ENCODE measurements at regions of chr15 and their contacts with region 1.

Region 1: DNA sequence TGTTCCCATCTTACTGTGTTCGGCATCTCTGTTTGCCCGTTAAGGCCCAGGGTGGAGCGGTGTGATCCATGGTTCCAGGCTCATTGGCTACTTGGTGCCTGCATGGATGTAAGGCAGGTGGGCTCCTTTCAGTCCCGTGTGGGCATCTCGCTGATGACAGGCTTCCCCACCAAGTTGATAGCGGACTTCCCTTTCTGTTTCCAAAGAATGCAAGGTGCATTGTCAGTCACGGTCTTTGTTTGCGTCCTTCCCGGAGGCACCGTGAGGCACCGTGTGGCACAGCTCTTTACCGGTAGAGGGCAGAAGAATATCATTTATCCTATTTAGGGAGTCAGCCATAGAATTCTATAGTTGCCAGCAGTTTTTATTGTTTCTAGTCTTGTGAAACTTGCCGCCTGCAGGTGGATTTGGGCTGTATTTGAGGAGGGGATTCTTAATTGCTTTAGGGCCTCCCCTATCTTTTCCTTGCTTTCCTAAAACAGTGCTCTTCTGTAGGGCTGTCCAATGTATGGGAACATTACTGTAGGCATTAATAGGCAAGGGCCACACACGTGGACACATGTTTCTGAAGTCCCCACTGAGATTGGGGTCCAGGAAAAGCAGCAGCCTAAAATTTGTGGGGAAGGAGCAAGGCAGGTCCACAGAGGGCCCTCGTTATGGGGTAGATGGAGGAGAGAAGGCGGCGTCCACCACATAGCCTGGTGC is 244.1 kb downstream of the SLCO3A1 start:
- DNase-seq: peak; percentile 69
- H3K4me3 ChIP-seq: no peak overlapping the region; a peak in 1 of 4 replicates
- H3K27ac ChIP-seq: no peak overlapping the region
- H3K4me1 ChIP-seq: peaks cover 0 to 9% of the 10 kb centered on the region in 2 experiments; a peak in 1 of 4 replicates
- H3K27me3 ChIP-seq: no peaks in the 10 kb centered on the region
- CTCF ChIP-seq: peak; percentile 75
- EP300 ChIP-seq: no peak
- RAD21 ChIP-seq: peak; percentile 94

Region 2: GRCh38 chr15:92112180-92112579 is 14.6 kb after region 1 on chr15:
- CTCF ChIA-PET with region 1: interaction called, 34 read pairs
- POLR2A ChIA-PET with region 1: no interaction called
- DNase-seq: no peak
- H3K4me3 ChIP-seq: no peak overlapping the region
- H3K27ac ChIP-seq: no peak overlapping the region; a peak in 1 of 4 replicates
- H3K4me1 ChIP-seq: peaks cover 0 to 3% of the 10 kb centered on the region in 2 experiments; a peak in 1 of 4 replicates
- H3K27me3 ChIP-seq: no peaks in the 10 kb centered on the region
- CTCF ChIP-seq: no peak
- EP300 ChIP-seq: no peak
- RAD21 ChIP-seq: no peak

Region 3: DNA sequence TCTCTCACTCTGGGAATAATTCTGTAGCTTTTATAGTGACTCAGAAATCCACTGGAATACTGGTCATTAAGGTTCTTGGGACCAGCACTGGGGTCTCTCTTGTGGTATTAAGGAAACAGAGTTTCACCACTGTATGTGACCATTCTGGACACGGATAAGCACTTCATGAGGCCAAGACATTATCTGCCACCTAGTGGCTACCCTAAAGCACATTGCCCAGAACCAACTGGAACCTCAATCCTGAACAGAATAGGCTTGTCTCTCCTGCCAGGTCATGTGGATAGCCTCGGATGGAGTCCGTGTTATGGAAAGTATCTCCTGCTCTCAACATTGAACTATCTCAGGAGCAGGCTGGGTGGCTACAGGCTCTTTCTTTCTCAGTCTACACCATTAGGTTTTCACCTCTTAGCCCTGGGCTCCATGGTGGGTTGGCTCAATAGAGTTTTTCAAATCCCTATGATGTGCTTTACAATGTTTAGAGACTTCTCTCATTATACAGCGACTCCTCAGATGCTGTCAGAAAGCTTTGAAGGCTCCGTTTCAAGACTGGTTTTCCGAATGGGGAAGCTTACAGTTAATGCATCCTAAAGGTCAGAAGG is 128.5 kb after region 1 on chr15:
- CTCF ChIA-PET with region 1: interaction called, 12 read pairs
- POLR2A ChIA-PET with region 1: no interaction called
- DNase-seq: peak; percentile 22
- H3K4me3 ChIP-seq: peak overlapping the region in 1 of 2 experiments; percentile 19; a peak in 1 of 4 replicates
- H3K27ac ChIP-seq: no peak overlapping the region
- H3K4me1 ChIP-seq: no peaks in the 10 kb centered on the region
- H3K27me3 ChIP-seq: no peaks in the 10 kb centered on the region
- CTCF ChIP-seq: peak; percentile 28; the same call in 1 of the 2 replicates
- EP300 ChIP-seq: no peak
- RAD21 ChIP-seq: peak; percentile 63

Region 4: DNA sequence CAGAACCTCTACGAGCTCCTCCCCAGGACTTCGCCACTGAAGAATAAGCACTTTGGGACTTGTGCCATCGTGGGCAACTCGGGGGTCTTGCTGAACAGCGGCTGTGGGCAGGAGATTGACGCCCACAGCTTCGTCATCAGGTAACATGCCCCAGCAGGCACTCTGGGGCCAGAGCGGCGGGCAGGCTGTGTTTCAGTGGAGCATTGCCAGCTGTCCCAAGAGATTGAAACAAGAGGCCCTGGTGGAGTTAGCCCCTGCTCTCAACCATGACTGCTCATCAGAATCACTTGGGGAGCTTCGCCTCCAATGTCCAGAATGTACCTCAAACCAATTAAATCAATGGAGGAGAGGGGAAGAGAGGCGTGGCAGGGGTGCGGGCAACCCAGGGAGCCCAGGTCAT is 340.8 kb after region 1 on chr15:
- CTCF ChIA-PET with region 1: no interaction called
- POLR2A ChIA-PET with region 1: no interaction called
- DNase-seq: no peak
- H3K4me3 ChIP-seq: no peak overlapping the region
- H3K27ac ChIP-seq: no peak overlapping the region
- H3K4me1 ChIP-seq: peaks cover 0 to 6% of the 10 kb centered on the region in 2 experiments; a peak in 1 of 4 replicates
- H3K27me3 ChIP-seq: no peaks in the 10 kb centered on the region
- CTCF ChIP-seq: no peak
- EP300 ChIP-seq: no peak
- RAD21 ChIP-seq: no peak